Right ventricle myocardium inferior (tissue), 1 donor: ENCODE measurements at regions of chr10 and their contacts with region 1.

Region 1: DNA sequence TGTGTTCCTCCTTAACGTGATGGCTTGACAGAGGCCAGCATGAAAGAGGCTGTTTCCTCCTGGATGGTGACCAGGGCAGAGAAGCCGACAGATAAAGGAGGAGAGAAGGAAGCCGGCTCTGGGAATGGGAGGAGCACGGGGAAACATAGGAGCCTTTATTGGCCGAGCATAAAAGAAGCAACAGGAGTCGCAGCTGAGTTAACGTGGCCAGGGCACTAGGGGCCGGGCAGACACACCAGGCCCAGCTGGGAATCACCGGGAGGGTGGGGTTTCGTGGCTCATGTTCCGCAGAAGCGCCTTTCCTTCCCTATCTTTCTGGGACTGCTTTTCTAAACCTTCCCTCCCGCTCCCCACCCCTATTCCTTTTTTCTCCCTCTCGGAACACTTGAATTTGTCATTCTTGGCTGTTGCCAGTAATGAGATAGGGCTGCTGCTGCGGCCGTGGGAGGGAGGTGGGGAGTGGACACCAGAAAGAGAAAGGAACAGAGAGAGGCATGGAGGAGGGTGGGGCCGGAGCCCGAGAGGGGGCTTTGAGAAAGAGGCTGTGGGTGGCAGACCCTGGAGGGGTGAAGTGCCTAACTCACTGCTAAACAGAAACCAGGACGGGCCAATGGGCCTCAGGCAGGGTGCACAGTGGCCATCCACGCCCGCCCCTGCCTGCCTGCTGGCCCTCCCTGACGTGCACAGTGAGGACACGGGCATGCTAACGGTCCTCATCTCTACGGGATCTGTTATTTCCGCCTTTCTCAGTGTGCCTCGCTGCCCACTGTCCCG is 65.2 kb downstream of the COL13A1 start:
- DNase-seq: no peak
- ATAC-seq: peak; percentile 74

Region 2: GRCh38 chr10:69749178-69750010 is 117.5 kb before region 1 on chr10:
- intact Hi-C with region 1: loop called (anchors 5 kb)
- DNase-seq: no peak
- ATAC-seq: no peak

Region 3: DNA sequence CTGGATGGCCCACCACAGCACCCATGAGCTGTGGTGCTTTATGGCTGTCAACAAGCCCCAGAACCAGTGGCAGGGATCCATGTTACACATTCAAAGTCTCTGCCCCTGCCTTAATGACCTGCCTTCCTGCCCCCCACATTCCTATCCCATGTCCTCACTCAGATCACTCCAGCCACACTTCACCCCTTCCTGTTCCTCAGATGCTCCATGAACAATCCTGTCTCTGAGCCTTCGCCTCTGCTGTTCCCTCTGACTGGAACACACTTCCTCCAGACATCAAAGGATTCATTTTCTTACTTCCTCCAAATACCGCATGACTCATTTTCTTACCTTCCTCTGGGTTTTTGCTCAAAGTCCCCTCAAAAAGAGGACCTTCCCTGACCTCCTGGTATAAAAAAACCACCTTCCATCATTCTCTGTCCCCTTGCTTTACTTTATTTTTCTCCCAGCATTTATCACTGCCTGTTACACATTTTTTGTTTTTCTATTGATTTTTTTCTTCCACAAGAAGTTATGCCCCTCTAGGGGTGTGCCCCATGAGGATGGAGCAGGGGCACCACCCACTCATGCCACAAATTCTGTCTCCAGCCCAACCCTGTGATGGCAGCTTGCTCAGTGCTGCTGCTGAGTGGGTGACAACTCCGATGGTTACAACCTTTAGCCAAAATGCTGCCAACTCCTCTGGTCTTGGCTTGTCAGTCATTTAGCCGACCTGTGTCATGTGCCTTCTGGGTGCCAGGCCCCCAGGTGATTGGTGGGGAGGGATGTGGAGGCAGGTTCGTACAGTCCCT is 47.0 kb before region 1 on chr10:
- intact Hi-C with region 1: no loop called
- DNase-seq: no peak
- ATAC-seq: no peak